Colonic mucosa (tissue), 4 donors: ENCODE measurements at regions of chr17 and their contacts with region 1.

Region 1: DNA sequence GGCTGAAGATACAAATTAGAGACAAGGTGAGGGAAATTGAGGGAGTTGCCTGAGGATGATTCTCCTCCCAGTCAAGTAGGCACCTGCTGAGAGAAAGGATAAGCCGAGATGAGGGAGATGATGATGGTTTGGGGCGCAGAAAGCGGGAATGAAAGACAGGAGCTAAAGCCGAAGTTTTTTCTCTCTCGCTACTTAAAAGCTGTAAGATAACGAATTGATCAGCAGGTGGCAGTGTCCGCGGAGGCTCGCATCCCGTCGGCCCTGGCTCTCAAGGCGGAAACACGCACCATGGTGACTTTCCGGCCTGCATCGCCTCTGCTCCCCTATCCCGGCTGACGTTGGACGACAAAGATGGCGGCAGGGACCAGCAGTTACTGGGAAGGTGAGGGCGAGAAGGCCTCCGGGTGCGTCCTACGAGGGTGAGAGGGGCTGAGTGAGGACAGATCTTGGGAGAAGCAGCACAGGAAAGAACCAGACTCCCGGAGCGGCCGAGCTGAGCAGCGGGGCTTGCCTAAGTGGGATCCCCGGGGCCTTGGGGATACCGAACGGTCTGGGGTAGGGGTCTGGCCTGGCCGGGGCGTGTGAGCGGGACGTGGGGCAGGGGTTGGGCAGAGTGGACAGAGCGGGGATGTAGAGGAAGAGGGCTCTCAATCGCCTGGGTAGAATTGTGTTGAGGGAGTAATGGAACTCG is at the start of gene GOSR1:
- DNase-seq: peak; percentile 95
- H3K4me3 ChIP-seq: peak within 1 kb of the TSS; percentile 97
- H3K27ac ChIP-seq: peak within 1 kb of the TSS; percentile 80
- H3K4me1 ChIP-seq: peaks cover 6% of the 10 kb centered on the region
- H3K27me3 ChIP-seq: no peaks in the 10 kb centered on the region
- CTCF ChIP-seq: peak; percentile 63
- total RNA-seq, gene GOSR1: 48.7 to 53.9 TPM

Region 2: DNA sequence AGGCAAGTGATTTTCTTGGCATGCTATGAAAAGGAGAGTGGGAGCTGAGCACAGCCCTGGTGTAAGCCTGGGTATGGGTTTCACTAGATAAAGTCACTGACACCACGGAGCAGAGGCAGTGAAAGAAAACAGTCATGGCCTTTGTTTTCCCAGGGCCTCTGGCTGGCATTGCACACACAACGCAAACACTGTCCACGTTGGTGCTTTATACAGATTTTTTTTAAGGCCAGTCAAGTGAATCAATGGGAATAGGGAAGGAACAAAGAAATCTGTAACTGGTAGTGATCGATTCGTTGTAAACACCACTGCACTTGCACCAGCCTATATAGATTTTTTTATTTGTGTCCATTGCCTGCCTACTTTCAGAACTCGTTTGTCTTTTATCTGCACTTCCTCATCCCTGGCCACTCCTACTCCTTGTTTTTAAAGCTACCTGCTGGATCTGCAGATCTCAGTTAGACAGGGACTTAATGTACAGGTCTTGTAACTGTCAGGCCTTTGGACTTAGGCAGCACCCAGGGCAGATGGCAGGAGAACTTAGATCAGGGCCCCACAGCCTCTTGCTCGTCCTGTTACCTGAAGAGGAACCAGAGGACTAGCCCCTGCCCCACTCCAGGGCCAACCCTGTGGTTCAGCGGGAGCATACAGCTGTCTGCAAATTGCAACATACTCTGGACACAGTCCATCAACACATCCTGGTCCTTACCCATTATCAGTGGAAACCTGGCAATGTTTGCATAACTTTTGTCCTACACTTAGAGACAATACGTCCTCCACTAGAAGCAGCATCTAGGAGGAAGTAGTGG is 132.7 kb before region 1 on chr17:
- intact Hi-C with region 1: loop called (anchors 10 kb)
- DNase-seq: peak; percentile 82
- H3K4me3 ChIP-seq: no peak overlapping the region
- H3K27ac ChIP-seq: peak overlapping the region; percentile 84
- H3K4me1 ChIP-seq: no peaks in the 10 kb centered on the region
- H3K27me3 ChIP-seq: no peaks in the 10 kb centered on the region
- CTCF ChIP-seq: no peak

Region 3: DNA sequence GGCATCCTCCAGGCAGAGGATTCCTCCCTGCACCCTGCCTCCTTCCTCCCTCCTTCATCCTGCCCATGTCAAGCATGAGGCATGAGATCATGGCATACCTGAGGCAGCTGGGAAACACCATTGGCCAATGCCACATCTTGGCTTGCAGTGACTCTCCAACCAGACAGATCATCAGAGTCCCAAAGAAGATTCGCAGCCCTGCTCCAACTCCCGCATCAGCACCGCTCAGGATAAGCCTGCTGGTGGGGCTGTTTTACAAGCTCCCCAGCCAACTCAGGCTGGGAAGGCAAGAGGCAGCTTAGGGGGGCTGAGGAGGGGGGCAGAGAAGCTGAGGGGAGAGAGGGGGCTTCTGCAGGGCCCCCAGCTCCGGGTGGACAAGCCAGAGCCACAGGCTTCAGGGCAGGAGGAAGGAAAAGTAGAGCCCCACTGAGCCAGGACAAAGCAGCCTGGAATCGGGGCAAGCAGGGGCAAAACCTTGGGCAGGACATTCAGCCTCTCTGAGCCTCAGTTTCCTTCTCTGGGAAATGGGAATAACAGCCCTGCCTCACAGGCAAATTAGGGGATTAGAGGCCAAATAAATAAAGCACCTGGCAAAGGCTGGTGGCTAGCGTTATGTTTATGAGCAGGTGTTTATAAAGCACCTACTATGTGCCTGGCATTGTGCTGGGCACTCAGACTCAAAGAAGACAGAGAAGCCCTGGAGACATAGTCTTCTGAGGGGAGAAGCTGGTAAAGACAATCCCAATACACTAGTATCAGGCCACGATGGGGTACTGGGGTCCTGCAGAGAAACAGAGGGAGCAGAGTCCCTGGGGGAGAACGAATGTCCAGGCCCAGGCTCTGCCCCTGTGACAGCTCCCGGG is 88.1 kb after region 1 on chr17:
- intact Hi-C with region 1: no loop called
- DNase-seq: no peak
- H3K4me3 ChIP-seq: no peak overlapping the region
- H3K27ac ChIP-seq: no peak overlapping the region
- H3K4me1 ChIP-seq: no peaks in the 10 kb centered on the region
- H3K27me3 ChIP-seq: no peaks in the 10 kb centered on the region
- CTCF ChIP-seq: no peak